Sigmoid colon (tissue), 7 donors: ENCODE measurements at regions of chr5 and their contacts with region 1.

Region 1: DNA sequence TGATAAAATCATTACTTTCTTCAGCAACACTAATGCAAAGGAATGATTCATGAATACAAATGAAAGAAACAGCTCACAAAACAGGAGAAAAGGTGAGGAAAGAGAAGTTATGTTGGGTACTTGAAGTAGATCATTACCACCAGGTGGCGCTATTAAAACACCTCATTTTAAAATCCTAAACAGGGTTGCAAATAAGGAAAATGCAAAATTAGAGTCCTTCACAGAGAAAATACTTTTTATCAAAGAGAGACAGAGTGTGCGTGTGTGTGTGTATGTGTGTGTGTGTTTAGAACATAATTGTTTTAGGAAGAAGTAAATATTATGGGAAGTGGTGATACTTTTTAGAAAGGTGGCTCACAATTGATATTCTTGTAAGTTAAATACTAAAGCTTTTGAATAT is 49.5 kb upstream of the CD180 start:
- DNase-seq: no peak
- H3K4me3 ChIP-seq: no peak overlapping the region
- H3K27ac ChIP-seq: peak overlapping the region; percentile 51 to 72 (median 64)
- H3K4me1 ChIP-seq: peaks cover 0 to 79% (median 68%) of the 10 kb centered on the region in 4 donors
- H3K27me3 ChIP-seq: no peaks in the 10 kb centered on the region
- CTCF ChIP-seq: peak; percentile 69 to 88 (median 76)
- EP300 ChIP-seq: no peak
- POLR2A ChIP-seq: no peak

Region 2: DNA sequence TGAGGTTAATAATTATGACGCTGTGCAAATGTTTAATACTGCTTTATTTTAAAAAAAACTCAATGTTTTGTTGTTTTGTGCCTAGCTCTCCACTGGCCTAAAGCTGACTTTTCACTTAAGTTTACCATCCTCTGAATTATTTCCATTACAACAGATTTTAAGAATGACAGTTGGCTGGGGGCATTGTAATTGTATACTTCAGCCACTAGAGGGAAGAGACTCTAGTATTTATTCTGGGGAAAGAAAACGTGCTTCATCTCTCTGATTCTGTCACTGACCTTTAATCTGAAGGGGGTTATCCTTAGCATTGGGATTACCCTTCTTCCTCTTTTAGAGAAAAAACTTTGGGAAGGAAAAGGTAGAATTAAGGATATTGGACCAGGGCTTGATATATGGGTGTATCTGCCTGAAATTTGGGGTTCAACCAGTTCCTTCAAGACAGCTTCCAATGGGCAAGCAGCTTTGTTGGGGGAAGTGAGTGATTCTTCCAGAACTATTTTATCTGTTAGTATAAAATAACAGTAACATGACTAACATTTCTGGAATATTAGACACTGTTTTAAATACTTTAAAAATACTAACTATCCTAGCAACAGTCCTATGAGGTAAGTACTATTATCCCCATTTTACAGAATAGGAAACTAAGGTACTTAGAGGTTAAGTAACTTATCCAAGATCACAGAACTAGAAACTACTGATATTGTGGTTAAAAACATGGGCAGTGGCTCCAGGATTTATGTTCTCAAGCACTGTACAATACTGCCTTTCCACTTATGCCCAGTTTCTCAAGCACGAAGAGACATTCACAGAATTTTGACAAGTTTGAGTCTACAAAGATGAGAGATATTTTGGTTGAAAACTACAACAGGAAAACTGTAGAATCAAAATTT is 257.9 kb before region 1 on chr5:
- intact Hi-C with region 1: no loop called
- DNase-seq: no peak
- H3K4me3 ChIP-seq: no peak overlapping the region
- H3K27ac ChIP-seq: no peak overlapping the region
- H3K4me1 ChIP-seq: peaks cover 0 to 13% (median 3%) of the 10 kb centered on the region in 4 donors
- H3K27me3 ChIP-seq: no peaks in the 10 kb centered on the region
- CTCF ChIP-seq: peak; percentile 44 to 88 (median 83)
- EP300 ChIP-seq: no peak
- POLR2A ChIP-seq: no peak

Region 3: DNA sequence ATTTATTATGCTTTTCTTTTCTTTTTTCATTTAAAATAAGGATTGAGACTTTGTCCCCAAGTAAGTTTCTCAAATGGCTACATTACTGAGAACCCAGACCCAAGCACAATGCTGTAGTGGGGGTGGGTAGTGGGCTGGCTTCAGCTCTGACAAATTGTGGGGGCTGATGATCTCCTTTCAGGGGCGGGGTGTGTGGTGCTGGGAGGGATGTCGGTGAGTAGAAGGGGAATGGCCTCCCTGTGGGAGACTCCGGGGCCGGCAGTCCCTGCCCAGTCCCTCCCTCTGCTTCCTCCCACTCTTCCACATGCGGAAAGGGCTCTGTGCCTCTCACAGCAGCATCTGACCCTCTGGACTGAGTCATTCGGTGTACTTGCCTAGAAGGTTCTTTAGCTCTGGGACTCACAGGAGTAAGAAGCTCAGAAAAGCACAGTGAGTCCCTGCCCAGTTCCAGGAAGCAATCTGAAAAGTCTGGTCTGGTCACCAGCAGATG is 63.8 kb before region 1 on chr5:
- intact Hi-C with region 1: no loop called
- DNase-seq: peak; percentile 81
- H3K4me3 ChIP-seq: no peak overlapping the region
- H3K27ac ChIP-seq: peak overlapping the region in 2 of 4 donors; percentile 31 to 51
- H3K4me1 ChIP-seq: peaks cover 0 to 5% (median 0%) of the 10 kb centered on the region in 4 donors
- H3K27me3 ChIP-seq: no peaks in the 10 kb centered on the region
- CTCF ChIP-seq: no peak
- EP300 ChIP-seq: no peak
- POLR2A ChIP-seq: no peak

Region 4: GRCh38 chr5:67395790-67396418 is 149.8 kb after region 1 on chr5:
- intact Hi-C with region 1: loop called (anchors 10 kb)
- DNase-seq: no peak
- H3K4me3 ChIP-seq: no peak overlapping the region
- H3K27ac ChIP-seq: no peak overlapping the region
- H3K4me1 ChIP-seq: peaks cover 0 to 11% (median 0%) of the 10 kb centered on the region in 4 donors
- H3K27me3 ChIP-seq: no peaks in the 10 kb centered on the region
- CTCF ChIP-seq: no peak
- EP300 ChIP-seq: no peak
- POLR2A ChIP-seq: no peak

Region 5: DNA sequence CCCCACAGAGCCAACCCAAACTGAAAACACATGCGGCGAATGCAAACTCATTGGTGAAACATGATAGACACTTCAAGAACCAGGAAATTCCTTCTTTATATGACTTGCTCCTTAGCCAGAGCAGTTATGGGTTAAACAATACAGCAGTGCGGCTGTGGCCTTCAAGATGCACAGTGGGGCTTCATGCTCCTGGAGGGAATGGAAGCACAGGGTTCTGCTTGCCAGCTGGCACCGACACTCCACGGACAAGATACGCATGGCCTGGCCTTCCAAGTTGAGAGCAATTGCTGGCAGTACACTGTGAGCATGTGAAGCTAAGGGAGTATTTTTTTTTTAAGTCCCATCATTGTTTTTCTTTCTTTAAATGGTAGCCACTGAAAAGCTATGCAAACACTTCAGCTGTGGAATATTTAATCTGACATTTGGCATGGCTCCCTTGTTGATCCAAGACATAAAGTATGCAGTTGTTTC is 402.1 kb after region 1 on chr5:
- intact Hi-C with region 1: loop called (anchors 5 kb)
- DNase-seq: peak; percentile 98
- H3K4me3 ChIP-seq: no peak overlapping the region
- H3K27ac ChIP-seq: peak overlapping the region; percentile 77 to 82 (median 79)
- H3K4me1 ChIP-seq: peaks cover 0 to 62% (median 48%) of the 10 kb centered on the region in 4 donors
- H3K27me3 ChIP-seq: no peaks in the 10 kb centered on the region
- CTCF ChIP-seq: no peak
- EP300 ChIP-seq: peak; percentile 45 to 89 (median 74)
- POLR2A ChIP-seq: no peak

Region 6: DNA sequence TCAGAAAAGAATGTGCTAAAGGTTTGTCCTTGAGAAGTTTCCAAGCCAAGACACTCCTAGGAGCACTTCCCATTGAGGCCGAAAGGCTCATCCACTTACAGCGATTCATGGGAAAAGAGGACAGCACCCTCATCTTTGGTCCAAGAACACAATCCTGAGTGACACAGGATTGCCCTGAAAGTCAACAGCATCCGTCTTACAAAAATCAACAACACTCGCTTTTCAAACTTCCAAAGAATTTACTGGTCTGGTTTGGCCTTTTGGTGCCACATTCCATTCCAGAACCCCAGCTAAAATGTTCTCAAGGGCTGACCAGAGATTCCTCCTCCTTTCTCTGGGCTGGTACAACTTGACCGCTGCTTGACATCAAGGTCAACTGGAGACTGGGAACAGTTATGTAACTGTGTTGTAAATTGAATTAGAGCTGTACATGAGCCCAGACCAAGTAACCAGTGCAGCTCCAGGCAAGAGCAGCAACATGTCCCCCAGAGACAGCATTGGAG is 553.7 kb after region 1 on chr5:
- intact Hi-C with region 1: loop called (anchors 10 kb)
- DNase-seq: peak; percentile 84
- H3K4me3 ChIP-seq: no peak overlapping the region
- H3K27ac ChIP-seq: peak overlapping the region; percentile 59 to 77 (median 72)
- H3K4me1 ChIP-seq: peaks cover 0 to 20% (median 16%) of the 10 kb centered on the region in 4 donors
- H3K27me3 ChIP-seq: no peaks in the 10 kb centered on the region
- CTCF ChIP-seq: no peak
- EP300 ChIP-seq: peak in 3 of 4 donors; percentile 31 to 58 (median 32)
- POLR2A ChIP-seq: no peak

Region 7: GRCh38 chr5:68027519-68027918 is 781.4 kb after region 1 on chr5:
- intact Hi-C with region 1: loop called (anchors 5 kb)
- DNase-seq: peak; percentile 85
- H3K4me3 ChIP-seq: no peak overlapping the region
- H3K27ac ChIP-seq: peak overlapping the region; percentile 75 to 86 (median 80)
- H3K4me1 ChIP-seq: peaks cover 3 to 51% (median 42%) of the 10 kb centered on the region in 4 donors
- H3K27me3 ChIP-seq: no peaks in the 10 kb centered on the region
- CTCF ChIP-seq: no peak
- EP300 ChIP-seq: peak; percentile 98 to 99 (median 98)
- POLR2A ChIP-seq: no peak

Region 8: GRCh38 chr5:68215208-68215897 is 969.2 kb after region 1 on chr5 and contains the start of gene PIK3R1:
- intact Hi-C with region 1: loop called (anchors 5 kb)
- DNase-seq: peak; percentile 97
- H3K4me3 ChIP-seq: peak within 1 kb of the TSS; percentile 90 to 98 (median 92)
- H3K27ac ChIP-seq: peak within 1 kb of the TSS; percentile 94 to 99 (median 96)
- H3K4me1 ChIP-seq: peaks cover 0 to 31% (median 27%) of the 10 kb centered on the region in 4 donors
- H3K27me3 ChIP-seq: no peaks in the 10 kb centered on the region
- CTCF ChIP-seq: peak in 3 of 4 experiments; percentile 50 to 60 (median 51)
- EP300 ChIP-seq: no peak
- POLR2A ChIP-seq: peak; percentile 56 to 59
- total RNA-seq, gene PIK3R1: 177 to 227 (median 190) TPM